Pancreas (tissue), 10 donors: ENCODE measurements at regions of chr4 and their contacts with region 1.

Region 1: DNA sequence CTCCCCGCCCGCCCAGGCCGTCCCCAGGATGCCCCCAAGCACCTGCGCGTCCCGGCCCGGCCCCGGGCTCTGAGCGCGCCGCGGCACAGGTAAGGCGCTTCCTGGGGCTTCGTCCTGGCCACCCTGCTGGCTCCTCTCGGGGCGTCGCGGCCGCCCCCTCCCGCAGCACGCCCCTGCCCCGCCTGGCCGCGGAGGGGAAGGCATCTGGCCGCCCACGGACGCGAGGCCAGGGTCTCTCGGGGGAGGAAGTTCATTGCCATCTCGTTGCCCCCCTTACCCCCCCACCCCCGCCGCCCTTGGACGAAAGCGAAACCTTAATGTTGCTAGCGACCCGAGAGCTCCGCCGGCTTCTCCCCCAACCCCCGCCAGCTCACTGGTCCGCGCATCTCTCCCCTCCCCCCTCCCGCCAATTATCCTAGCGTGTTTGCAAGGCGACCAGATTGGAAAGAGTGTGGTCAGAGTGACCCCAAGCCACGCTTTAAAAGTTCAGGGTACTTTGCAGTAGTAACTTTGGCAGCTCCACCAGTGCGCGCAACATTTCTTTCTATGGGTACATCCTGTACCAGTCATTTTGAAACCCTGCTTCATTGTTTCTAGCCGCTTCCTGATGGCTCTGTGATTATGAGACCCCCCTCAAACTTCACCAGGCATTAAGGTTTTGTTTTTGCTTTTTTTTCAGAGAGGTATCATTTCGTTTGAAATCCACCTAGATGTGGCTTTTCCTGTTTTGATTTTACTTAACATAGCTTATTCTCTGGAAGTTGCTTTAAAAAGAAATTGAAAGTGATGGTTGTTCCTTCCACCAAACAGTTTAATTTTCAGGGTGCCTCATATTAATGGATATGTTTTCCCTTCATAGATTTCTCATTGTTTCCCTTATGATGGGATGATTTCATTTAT is 626 bp downstream of the TBC1D1 start:
- DNase-seq: peak in 2 of 6 donors; percentile 7 to 25
- ATAC-seq: peak; percentile 26 to 67 (median 47)
- H3K4me3 ChIP-seq: peak overlapping the region; percentile 52 to 92 (median 72)
- H3K27ac ChIP-seq: peak overlapping the region in 2 of 4 donors; percentile 36 to 55
- H3K4me1 ChIP-seq: peaks cover 0 to 3% (median 0%) of the 10 kb centered on the region in 3 donors
- H3K27me3 ChIP-seq: no peaks in the 10 kb centered on the region
- CTCF ChIP-seq: no peak

Region 2: GRCh38 chr4:37970487-37971101 is 79.1 kb after region 1 on chr4:
- intact Hi-C with region 1: loop called in 1 of 3 experiments (anchors 5 kb)
- DNase-seq: peak in 5 of 6 donors; percentile 52 to 76 (median 70)
- ATAC-seq: peak; percentile 80 to 93 (median 90)
- H3K4me3 ChIP-seq: no peak overlapping the region
- H3K27ac ChIP-seq: peak overlapping the region in 2 of 4 donors; percentile 34 to 38
- H3K4me1 ChIP-seq: peaks cover 0 to 5% (median 5%) of the 10 kb centered on the region in 3 donors
- H3K27me3 ChIP-seq: no peaks in the 10 kb centered on the region
- CTCF ChIP-seq: peak in 3 of 4 donors; percentile 12 to 29 (median 28)

Region 3: GRCh38 chr4:38015886-38016515 is 124.5 kb after region 1 on chr4:
- intact Hi-C with region 1: no loop called
- DNase-seq: no peak
- ATAC-seq: no peak
- H3K4me3 ChIP-seq: no peak overlapping the region
- H3K27ac ChIP-seq: no peak overlapping the region
- H3K4me1 ChIP-seq: peaks cover 0 to 22% (median 7%) of the 10 kb centered on the region in 3 donors
- H3K27me3 ChIP-seq: no peaks in the 10 kb centered on the region
- CTCF ChIP-seq: no peak